ENCODE measurements at regions of chr21 and their contacts with region 1.

Region 1: GRCh38 chr21:45098867-45099266 is 24.5 kb downstream of the ADARB1 start:
- DNase-seq: no peak
- ATAC-seq: no peak
- H3K4me3 Mint-ChIP-seq: no peak overlapping the region
- H3K27ac Mint-ChIP-seq: no peak overlapping the region
- H3K4me1 Mint-ChIP-seq: peaks cover 43% of the 10 kb centered on the region
- H3K27me3 Mint-ChIP-seq: no peaks in the 10 kb centered on the region

Region 2: GRCh38 chr21:45055861-45056260 is 43.0 kb before region 1 on chr21:
- CTCF ChIA-PET with region 1: no interaction called
- POLR2A ChIA-PET with region 1: no interaction called
- DNase-seq: no peak
- ATAC-seq: no peak
- H3K4me3 Mint-ChIP-seq: no peak overlapping the region
- H3K27ac Mint-ChIP-seq: no peak overlapping the region
- H3K4me1 Mint-ChIP-seq: no peaks in the 10 kb centered on the region
- H3K27me3 Mint-ChIP-seq: peaks cover 27% of the 10 kb centered on the region

Region 3: GRCh38 chr21:45074818-45075595 is 23.9 kb before region 1 on chr21:
- CTCF ChIA-PET with region 1: interaction called, 23 read pairs
- POLR2A ChIA-PET with region 1: no interaction called
- DNase-seq: peak; percentile 32
- ATAC-seq: peak; percentile 5
- H3K4me3 Mint-ChIP-seq: peak overlapping the region; percentile 82
- H3K27ac Mint-ChIP-seq: peak overlapping the region; percentile 78
- H3K4me1 Mint-ChIP-seq: peaks cover 50% of the 10 kb centered on the region
- H3K27me3 Mint-ChIP-seq: no peaks in the 10 kb centered on the region

Region 4: DNA sequence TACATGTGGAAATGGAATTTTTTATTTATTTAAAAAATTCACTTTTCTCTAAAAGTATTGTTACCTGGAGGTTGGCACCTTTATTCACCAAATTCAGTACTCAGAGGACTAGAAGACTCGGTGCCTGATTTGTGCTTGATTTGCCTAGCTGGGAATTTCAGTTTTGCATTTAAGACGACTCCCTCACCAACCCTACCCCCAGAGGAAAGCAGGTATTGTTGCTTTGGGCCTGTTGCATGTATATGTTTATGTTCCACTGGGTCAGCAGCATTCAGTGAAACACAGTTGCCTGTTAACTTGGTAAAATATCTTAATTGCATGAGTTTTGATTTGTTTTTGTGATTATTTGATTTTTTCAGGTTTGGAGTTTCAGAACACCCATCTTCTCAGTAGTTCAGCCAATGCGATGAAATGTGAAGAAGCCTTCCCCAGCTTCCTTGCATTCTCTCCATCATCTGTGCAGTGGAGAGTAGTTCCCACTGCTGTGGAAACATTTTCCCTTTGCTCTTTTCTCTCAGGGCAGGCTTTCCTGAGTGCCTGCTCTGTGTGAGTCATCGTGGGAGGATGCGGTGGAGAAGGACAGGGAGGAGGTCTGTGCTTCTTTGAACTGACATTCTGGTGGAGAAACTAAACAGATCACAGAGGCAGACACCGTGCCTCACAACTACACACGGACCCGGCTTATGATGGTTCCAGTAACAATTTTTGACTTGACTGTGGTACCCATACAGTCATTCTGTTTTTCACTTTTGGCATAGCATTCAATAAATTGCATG is 18.0 kb before region 1 on chr21:
- CTCF ChIA-PET with region 1: interaction called, 23 read pairs
- POLR2A ChIA-PET with region 1: no interaction called
- DNase-seq: peak; percentile 56
- ATAC-seq: peak; percentile 60
- H3K4me3 Mint-ChIP-seq: peak overlapping the region; percentile 60
- H3K27ac Mint-ChIP-seq: peak overlapping the region; percentile 89
- H3K4me1 Mint-ChIP-seq: peaks cover 98% of the 10 kb centered on the region
- H3K27me3 Mint-ChIP-seq: no peaks in the 10 kb centered on the region

Region 5: DNA sequence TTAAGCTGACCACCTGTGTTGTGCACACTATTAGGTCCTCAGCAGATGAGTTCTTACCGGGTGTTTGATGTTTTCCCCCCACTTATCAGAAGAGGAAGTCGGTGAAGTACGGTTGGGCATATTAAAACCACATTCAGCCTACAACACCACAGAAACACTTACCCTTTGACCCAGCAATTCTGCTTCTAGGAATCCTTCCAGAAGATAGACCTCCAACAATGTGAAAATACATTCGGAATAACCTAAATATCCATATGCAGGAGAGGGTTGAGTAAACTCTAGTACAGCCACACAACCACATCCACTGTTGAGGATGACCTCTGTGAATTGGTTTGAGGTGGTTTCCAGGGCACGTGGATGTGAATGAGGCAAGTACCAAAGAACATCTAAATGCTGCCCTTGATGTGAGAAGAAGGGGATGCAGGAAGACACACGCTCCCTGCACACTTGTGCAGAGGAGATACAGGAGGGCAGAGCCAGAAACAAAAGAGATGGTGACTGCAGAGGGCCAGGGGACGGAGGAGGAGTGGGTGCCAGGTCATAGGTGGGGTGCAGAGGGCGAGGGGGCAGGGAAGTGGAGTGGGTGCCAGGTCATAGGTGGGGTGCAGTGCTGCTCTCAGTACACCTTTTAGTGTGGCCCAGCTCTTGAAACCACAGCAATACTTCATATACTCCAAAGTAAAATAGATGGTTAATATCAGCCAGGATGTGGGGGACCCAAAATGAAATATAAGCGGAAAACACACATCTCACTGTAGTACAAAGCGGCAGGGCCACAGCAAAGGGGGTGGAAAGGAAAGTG is 11.6 kb before region 1 on chr21:
- CTCF ChIA-PET with region 1: interaction called, 18 read pairs
- POLR2A ChIA-PET with region 1: no interaction called
- DNase-seq: peak; percentile 72
- ATAC-seq: peak; percentile 59
- H3K4me3 Mint-ChIP-seq: peak overlapping the region; percentile 44
- H3K27ac Mint-ChIP-seq: peak overlapping the region; percentile 78
- H3K4me1 Mint-ChIP-seq: peaks cover 86% of the 10 kb centered on the region
- H3K27me3 Mint-ChIP-seq: no peaks in the 10 kb centered on the region

Region 6: GRCh38 chr21:45248893-45249381 is 150.1 kb after region 1 on chr21:
- CTCF ChIA-PET with region 1: no interaction called
- POLR2A ChIA-PET with region 1: no interaction called
- DNase-seq: no peak
- ATAC-seq: no peak
- H3K4me3 Mint-ChIP-seq: no peak overlapping the region
- H3K27ac Mint-ChIP-seq: no peak overlapping the region
- H3K4me1 Mint-ChIP-seq: no peaks in the 10 kb centered on the region
- H3K27me3 Mint-ChIP-seq: peaks cover 26% of the 10 kb centered on the region